ENCODE measurements at regions of chr15 and their contacts with region 1.

Region 1: GRCh38 chr15:60798821-60799220 is 319.9 kb upstream of the ICE2 start:
- DNase-seq: peak in 1 of 35 experiments; percentile 24
- ATAC-seq: no peak
- H3K4me3 ChIP-seq: no peak overlapping the region
- H3K4me3 Mint-ChIP-seq: no peak overlapping the region
- H3K27ac ChIP-seq: peak overlapping the region; percentile 70
- H3K27ac Mint-ChIP-seq: peak overlapping the region; percentile 87 to 92
- H3K4me1 ChIP-seq: peaks cover 15 to 53% of the 10 kb centered on the region in 2 experiments
- H3K4me1 Mint-ChIP-seq: peaks cover 65 to 89% (median 80%) of the 10 kb centered on the region in 3 donors
- H3K27me3 ChIP-seq: no peaks in the 10 kb centered on the region
- H3K27me3 Mint-ChIP-seq: no peaks in the 10 kb centered on the region

Region 2: GRCh38 chr15:59736184-59736583 is 1062.6 kb before region 1 on chr15:
- CTCF ChIA-PET with region 1: no interaction called
- POLR2A ChIA-PET with region 1: interaction called in 1 of 2 experiments, 11 read pairs
- DNase-seq: peak in 5 of 35 experiments; percentile 3 to 24 (median 18)
- ATAC-seq: peak in 1 of 4 experiments; percentile 35
- H3K4me3 ChIP-seq: no peak overlapping the region
- H3K4me3 Mint-ChIP-seq: no peak overlapping the region
- H3K27ac ChIP-seq: no peak overlapping the region
- H3K27ac Mint-ChIP-seq: no peak overlapping the region
- H3K4me1 ChIP-seq: no peaks in the 10 kb centered on the region
- H3K4me1 Mint-ChIP-seq: no peaks in the 10 kb centered on the region
- H3K27me3 ChIP-seq: peaks cover 0 to 10% of the 10 kb centered on the region in 2 experiments
- H3K27me3 Mint-ChIP-seq: peaks cover 4 to 5% of the 10 kb centered on the region in 2 donors

Region 3: DNA sequence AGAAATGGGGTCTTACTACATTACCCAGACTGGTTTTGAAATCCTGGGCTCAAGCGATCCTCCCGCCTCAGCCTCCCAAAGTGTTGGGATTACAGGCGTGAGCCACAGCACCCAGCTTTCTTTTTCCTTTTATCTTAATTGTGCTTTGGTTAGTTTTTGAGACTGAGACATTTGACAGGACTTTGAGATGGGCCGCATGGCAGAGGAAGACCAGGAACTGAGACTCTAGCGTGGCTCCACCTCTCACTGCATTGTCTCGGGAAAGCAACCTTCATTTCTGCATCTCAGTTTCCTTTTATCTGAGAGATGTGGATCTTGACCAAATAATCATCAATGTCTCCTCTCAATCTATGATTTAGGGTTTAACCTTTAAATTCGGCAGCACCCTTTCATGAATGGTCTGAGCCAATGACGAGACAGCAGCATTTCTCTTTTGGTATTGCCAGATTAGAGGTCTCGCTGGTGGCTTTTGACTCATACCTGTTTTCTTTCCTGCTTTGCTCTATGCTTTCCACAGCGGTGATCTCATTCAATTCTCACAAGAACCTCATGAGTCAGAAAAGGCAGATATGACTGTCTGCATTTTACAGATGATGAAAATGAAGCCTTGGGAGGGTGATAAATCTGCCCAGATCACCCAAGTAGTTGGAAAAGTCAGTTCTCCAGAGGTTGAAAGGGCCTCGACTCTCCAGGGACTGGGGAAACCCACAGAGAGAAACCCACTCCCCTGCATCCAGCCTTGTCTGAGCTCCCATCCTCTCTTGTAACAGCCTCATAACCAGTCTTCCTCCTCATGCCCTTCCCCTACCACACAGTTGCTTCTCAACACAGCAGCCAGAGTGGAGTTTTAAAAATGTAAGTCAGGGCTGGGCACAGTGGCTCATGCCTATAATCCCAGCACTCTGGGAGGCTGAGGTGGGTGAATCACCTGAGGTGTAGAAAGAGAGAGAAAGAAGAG is 879.5 kb before region 1 on chr15:
- CTCF ChIA-PET with region 1: no interaction called
- POLR2A ChIA-PET with region 1: no interaction called
- DNase-seq: peak in 6 of 35 experiments; percentile 1 to 36 (median 10)
- ATAC-seq: peak; percentile 61 to 89 (median 84)
- H3K4me3 ChIP-seq: no peak overlapping the region
- H3K4me3 Mint-ChIP-seq: peak overlapping the region; percentile 31 to 68 (median 61)
- H3K27ac ChIP-seq: no peak overlapping the region
- H3K27ac Mint-ChIP-seq: peak overlapping the region; percentile 80 to 90
- H3K4me1 ChIP-seq: peaks cover 9 to 21% of the 10 kb centered on the region in 2 experiments
- H3K4me1 Mint-ChIP-seq: peaks cover 21 to 35% (median 30%) of the 10 kb centered on the region in 3 donors
- H3K27me3 ChIP-seq: peaks cover 0 to 5% of the 10 kb centered on the region in 2 experiments
- H3K27me3 Mint-ChIP-seq: peaks cover 7 to 10% of the 10 kb centered on the region in 2 donors

Region 4: GRCh38 chr15:61091289-61091616 is 292.4 kb after region 1 on chr15:
- CTCF ChIA-PET with region 1: no interaction called
- POLR2A ChIA-PET with region 1: no interaction called
- DNase-seq: no peak
- ATAC-seq: no peak
- H3K4me3 ChIP-seq: no peak overlapping the region
- H3K4me3 Mint-ChIP-seq: no peak overlapping the region
- H3K27ac ChIP-seq: no peak overlapping the region
- H3K27ac Mint-ChIP-seq: no peak overlapping the region
- H3K4me1 ChIP-seq: no peaks in the 10 kb centered on the region
- H3K4me1 Mint-ChIP-seq: no peaks in the 10 kb centered on the region
- H3K27me3 ChIP-seq: peaks cover 0 to 2% of the 10 kb centered on the region in 2 experiments
- H3K27me3 Mint-ChIP-seq: peaks cover 10 to 24% of the 10 kb centered on the region in 2 donors

Region 5: DNA sequence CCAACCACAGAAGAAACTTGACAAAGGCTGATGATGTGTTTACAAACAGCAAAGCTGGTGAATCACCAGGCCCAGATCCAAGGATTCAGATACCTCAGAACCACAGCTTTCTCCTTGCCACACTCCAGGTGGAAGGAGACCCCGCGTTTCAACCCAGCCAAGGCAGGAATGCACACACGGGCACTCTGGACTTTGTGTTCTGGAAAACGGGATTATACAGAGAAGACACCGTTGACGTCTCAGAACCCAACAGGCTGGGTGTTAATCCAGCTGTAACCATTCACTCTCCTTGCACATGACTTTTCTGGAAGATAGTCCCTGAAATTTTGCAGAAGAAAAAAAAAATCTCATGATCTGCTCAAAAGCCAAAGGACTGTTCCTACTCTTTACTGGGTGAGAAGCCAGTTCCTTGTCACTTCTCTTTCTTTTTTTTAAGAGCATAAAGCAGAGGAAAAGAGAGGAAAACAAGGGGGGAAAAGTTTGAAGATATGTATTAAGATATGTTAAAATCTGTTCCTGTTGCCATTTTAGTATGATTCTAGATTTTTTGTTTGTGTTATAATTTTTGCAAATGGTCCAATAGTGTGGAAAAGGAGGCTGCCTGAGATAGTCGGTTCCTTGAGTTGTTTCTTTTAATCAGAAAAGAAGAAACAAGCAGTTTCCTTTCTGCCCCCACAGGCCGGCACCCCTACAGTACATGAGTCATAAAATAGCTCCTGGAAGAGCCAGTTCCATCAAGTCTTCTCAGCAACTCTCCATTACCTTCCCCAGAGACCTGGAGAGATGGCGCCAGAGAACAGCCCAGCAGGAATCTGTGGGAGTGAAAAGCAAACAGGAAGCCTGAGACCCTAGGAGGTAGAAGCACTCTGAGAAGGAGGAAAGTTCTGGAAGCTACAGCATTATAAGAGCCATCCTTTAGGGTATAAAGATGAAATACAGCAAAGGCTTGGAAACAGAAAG is 357.2 kb after region 1 on chr15:
- CTCF ChIA-PET with region 1: no interaction called
- POLR2A ChIA-PET with region 1: no interaction called
- DNase-seq: no peak
- ATAC-seq: no peak
- H3K4me3 ChIP-seq: no peak overlapping the region
- H3K4me3 Mint-ChIP-seq: no peak overlapping the region
- H3K27ac ChIP-seq: no peak overlapping the region
- H3K27ac Mint-ChIP-seq: no peak overlapping the region
- H3K4me1 ChIP-seq: no peaks in the 10 kb centered on the region
- H3K4me1 Mint-ChIP-seq: no peaks in the 10 kb centered on the region
- H3K27me3 ChIP-seq: peaks cover 0 to 2% of the 10 kb centered on the region in 2 experiments
- H3K27me3 Mint-ChIP-seq: peaks cover 34 to 47% of the 10 kb centered on the region in 2 donors